ENCODE measurements at regions of chr11 and their contacts with region 1.

Region 1: DNA sequence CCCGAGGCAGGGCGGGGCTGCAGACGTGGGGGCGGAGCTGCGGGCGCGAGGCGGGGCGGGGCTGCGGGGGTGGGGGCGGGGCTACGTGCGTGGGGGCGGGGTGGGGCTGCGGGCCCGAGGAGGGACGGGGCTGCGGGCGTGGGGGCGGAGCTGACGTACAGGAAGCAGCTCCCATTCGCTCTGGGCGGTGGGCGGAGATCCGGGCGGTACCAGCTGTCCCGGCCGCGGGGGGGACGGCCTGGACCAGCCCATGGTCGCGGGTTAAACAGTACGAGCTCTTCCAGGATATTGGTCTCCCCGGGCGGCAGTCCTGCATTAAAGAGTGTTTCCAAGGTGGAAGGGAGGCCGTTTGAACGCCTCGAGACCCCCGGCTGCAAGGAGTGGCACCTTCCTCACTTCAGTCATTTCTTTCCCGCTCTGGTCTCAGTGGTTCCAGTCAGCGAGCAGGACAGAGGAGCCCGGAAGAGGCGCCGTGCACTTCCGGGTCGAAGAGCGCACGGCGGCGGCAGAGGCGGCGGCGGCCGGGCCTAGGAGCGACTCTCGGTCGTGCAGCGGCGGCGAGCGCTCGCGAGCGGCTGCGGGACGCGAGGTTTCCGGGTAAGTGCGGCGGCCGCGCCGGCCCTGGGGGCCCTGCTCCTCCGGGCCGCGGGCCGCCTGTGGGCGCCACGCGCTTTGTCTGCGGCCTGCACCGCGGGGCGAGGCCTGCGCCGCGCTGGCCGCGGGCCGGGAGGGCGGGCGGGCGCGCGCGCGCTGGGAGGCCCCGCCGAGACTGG is at the start of gene PHRF1:
- DNase-seq: peak; percentile 95
- H3K4me3 Mint-ChIP-seq: peak within 1 kb of the TSS; percentile 91
- H3K27ac Mint-ChIP-seq: peak within 1 kb of the TSS; percentile 95
- H3K4me1 Mint-ChIP-seq: peaks cover 44% of the 10 kb centered on the region
- H3K27me3 Mint-ChIP-seq: peaks cover 13% of the 10 kb centered on the region
- total RNA-seq, gene PHRF1: 38.7 to 39.1 TPM

Region 2: GRCh38 chr11:615504-616319 is 39.5 kb after region 1 on chr11 and contains the start of gene IRF7:
- CTCF ChIA-PET with region 1: interaction called, 3 read pairs
- POLR2A ChIA-PET with region 1: interaction called, 15 read pairs
- DNase-seq: peak; percentile 94
- H3K4me3 Mint-ChIP-seq: peak within 1 kb of the TSS; percentile 94
- H3K27ac Mint-ChIP-seq: peak within 1 kb of the TSS; percentile 97
- H3K4me1 Mint-ChIP-seq: peaks cover 13% of the 10 kb centered on the region
- H3K27me3 Mint-ChIP-seq: no peaks in the 10 kb centered on the region
- total RNA-seq, gene IRF7: 220 to 221 TPM

Region 3: DNA sequence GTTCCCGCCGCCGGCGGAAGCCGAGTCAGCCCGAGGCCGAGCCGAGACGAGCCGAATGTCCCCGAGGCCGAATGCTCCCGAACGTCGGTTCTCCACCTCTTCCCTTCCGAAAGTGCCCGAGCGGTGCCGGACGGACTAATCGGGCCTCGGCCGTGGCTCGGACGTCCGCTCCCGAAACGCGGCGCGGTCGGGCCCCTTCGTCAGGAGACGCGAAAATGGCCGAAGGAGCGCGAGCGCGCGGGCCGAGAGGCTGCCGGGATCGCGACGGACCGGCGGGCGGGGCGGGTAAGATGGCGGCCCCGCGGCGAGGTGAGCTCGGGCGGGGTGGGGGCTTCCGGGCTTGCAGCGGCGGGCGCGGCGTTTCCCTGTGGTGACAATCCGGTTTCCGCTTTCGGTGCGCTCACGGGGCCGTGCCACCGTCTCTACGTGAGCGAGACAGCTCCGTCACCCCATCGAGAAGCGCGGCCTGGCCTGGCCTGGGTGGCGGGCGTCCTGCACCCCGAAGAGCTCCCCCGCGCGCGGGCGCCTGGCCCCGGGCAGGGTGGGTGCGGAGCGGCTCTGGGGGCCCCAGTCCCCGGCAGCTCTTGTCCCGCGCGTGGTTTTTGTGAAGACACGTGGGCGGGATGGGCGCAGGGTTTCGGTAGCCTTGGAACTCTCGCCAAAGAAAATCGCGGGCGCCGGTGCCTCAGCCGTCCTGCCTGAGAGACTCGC is 119.5 kb after region 1 on chr11 and contains the start of gene TMEM80:
- CTCF ChIA-PET with region 1: interaction called, 3 read pairs
- POLR2A ChIA-PET with region 1: interaction called, 10 read pairs
- DNase-seq: peak; percentile 99
- H3K4me3 Mint-ChIP-seq: peak within 1 kb of the TSS; percentile 89
- H3K27ac Mint-ChIP-seq: peak within 1 kb of the TSS; percentile 91
- H3K4me1 Mint-ChIP-seq: peaks cover 52% of the 10 kb centered on the region
- H3K27me3 Mint-ChIP-seq: no peaks in the 10 kb centered on the region
- total RNA-seq, gene TMEM80: 22.6 to 25.3 TPM

Measured in activated CD4-positive, alpha-beta memory T cell treated with anti-CD3 and anti-CD28 coated beads, Interleukin-2, amount 10 ng/mL, durations not matched to agents 7 days and 5 days (primary cell).